ENCODE measurements at regions of chr16 and their contacts with region 1.

Region 1: GRCh38 chr16:89641458-89642119 is 15.9 kb downstream of the CHMP1A start:
- DNase-seq: no peak
- H3K4me3 Mint-ChIP-seq: no peak overlapping the region
- H3K27ac Mint-ChIP-seq: no peak overlapping the region
- H3K4me1 Mint-ChIP-seq: peaks cover 10% of the 10 kb centered on the region
- H3K27me3 Mint-ChIP-seq: peaks cover 2% of the 10 kb centered on the region

Region 2: GRCh38 chr16:89574681-89575246 is 66.8 kb before region 1 on chr16:
- intact Hi-C with region 1: loop called (anchors 1 kb)
- DNase-seq: peak; percentile 33
- H3K4me3 Mint-ChIP-seq: peak overlapping the region; percentile 39
- H3K27ac Mint-ChIP-seq: no peak overlapping the region
- H3K4me1 Mint-ChIP-seq: peaks cover 10% of the 10 kb centered on the region
- H3K27me3 Mint-ChIP-seq: peaks cover 26% of the 10 kb centered on the region

Region 3: DNA sequence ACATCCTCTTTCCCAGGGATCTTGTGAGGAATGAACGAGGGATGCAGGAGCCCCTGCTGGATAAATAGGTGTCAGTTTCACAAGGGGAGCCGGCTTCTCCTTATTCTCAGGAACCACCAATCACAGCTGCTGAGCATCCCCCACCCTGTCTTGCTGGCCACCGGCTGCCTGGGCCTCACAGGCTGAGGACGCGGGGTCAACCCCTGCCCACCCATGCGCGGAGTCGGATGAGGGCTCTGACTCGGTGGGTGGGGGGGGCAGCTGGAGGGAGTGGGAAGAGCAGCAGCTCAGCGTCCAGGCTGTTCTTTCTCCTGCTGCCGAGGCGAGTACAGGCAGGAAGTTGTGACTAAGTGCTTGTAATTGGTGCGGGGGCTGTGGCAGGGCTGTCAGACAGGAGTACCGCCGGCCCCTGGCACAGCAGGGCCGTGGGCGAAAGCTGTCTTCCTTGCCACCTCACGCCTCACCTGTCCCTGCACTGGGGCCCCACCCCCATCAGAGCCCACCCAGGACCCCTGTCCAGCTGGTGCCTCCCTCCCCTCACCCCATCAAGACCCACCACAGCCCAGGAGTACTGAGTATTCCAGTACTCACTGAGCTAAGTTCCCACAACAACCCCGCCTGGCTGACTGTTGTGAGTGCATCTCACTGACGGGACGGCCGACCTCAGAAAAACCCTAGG is 39.2 kb before region 1 on chr16:
- intact Hi-C with region 1: loop called (anchors 1 kb)
- DNase-seq: peak; percentile 26
- H3K4me3 Mint-ChIP-seq: no peak overlapping the region
- H3K27ac Mint-ChIP-seq: peak overlapping the region; percentile 7
- H3K4me1 Mint-ChIP-seq: peaks cover 13% of the 10 kb centered on the region
- H3K27me3 Mint-ChIP-seq: no peaks in the 10 kb centered on the region

Region 4: GRCh38 chr16:89657442-89658220 is 16.0 kb after region 1 on chr16 and contains the starts of genes CHMP1A and SPATA33:
- intact Hi-C with region 1: loop called (anchors 1 kb)
- DNase-seq: peak; percentile 91
- H3K4me3 Mint-ChIP-seq: peak within 1 kb of the TSS; percentile 93
- H3K27ac Mint-ChIP-seq: peak within 1 kb of the TSS; percentile 84
- H3K4me1 Mint-ChIP-seq: peaks cover 56% of the 10 kb centered on the region
- H3K27me3 Mint-ChIP-seq: no peaks in the 10 kb centered on the region
- total RNA-seq, gene CHMP1A: 85.7 and 87.7 TPM in 2 replicates
- total RNA-seq, gene SPATA33: 15.1 and 16.1 TPM in 2 replicates

Measured in activated T-helper 1 cell treated with anti-CD3 and anti-CD28 coated beads, Interleukin-12 subunit alpha, Interleukin-12 subunit beta, Interleukin-2, Interleukin-4 antibody, amounts not matched to agents 30 ng/mL and 10 ng/mL and 1 ng/mL, durations not matched to agents 14 hours and 24 hours and 36 hours (primary cell).